ENCODE measurements at regions of chr9 and their contacts with region 1.

Region 1: DNA sequence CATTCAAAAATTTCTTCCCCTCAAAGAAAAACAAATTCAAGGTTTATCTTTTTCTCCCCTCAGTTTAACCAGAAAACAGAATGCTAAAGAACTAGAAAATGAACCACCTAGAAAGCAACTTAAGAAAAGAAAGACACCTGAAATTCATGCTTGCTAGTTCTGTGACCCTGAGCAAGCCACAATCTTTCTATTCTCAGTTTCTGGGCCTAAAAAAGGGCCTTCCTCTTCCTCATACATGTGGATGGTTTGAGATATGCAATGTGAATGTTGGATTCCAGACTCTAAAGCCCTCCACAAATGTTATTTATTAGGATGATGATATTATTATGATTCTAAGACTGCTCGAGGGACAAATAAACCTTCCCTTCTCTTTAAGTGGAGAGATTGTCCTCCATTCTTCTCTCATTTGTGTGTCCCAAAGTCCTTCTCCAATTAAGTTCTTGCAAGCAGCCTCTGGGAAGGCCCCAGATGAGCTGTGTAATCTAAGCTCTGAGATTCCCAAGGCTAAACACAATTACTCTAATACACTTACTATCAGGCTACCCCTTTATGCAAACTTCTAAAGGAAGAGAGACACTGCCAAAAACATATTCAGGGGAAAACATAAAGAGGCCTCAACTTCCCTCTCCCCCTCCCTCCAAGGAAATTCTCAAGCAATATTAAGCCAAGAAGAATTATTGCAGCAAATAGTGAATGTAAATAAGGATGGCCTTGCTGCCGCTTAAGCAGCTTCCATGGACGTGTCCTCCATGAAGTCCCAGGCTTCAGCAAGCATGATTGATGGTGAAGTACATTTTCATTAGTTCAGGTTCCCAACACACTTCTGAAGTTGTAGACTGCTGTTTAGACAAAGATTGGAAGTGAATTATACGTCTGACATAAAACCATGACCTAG is 80.2 kb downstream of the PRKACG start:
- DNase-seq: no peak
- H3K4me3 ChIP-seq: no peak overlapping the region
- H3K27ac ChIP-seq: peak overlapping the region in 1 of 2 donors; percentile 23
- H3K4me1 ChIP-seq: peaks cover 0 to 13% (median 0%) of the 10 kb centered on the region in 4 donors
- H3K27me3 ChIP-seq: no peaks in the 10 kb centered on the region
- CTCF ChIP-seq: no peak

Region 2: DNA sequence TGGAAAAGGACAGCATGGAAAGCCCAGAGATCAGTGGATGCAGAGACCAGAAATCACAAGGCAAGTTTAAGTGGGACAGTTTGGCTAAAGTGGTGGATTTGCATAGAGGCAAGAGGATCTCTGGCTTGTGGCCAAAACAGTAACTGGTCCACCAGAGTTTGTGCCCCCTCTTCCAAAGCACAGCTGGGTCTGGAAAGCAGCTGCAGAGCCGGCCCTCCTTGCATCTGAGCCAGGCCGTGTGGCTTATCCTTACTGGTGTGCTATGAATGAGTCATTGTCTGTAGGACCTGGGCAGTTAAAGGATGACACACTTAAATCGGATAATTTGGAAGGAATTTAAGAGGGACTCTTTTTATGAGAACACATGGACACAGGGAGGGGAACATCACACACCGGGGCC is 82.0 kb before region 1 on chr9:
- intact Hi-C with region 1: loop called (anchors 10 kb)
- DNase-seq: no peak
- H3K4me3 ChIP-seq: no peak overlapping the region
- H3K27ac ChIP-seq: no peak overlapping the region
- H3K4me1 ChIP-seq: no peaks in the 10 kb centered on the region
- H3K27me3 ChIP-seq: no peaks in the 10 kb centered on the region
- CTCF ChIP-seq: no peak

Region 3: GRCh38 chr9:68999393-69000105 is 65.9 kb after region 1 on chr9:
- intact Hi-C with region 1: no loop called
- DNase-seq: peak in 1 of 2 donors; percentile 63
- H3K4me3 ChIP-seq: no peak overlapping the region
- H3K27ac ChIP-seq: no peak overlapping the region
- H3K4me1 ChIP-seq: peaks cover 0 to 11% (median 2%) of the 10 kb centered on the region in 4 donors
- H3K27me3 ChIP-seq: no peaks in the 10 kb centered on the region
- CTCF ChIP-seq: peak; percentile 59 to 70